Naive thymus-derived CD4-positive, alpha-beta T cell (primary cell): ENCODE measurements at regions of chr16 and their contacts with region 1.

Region 1: DNA sequence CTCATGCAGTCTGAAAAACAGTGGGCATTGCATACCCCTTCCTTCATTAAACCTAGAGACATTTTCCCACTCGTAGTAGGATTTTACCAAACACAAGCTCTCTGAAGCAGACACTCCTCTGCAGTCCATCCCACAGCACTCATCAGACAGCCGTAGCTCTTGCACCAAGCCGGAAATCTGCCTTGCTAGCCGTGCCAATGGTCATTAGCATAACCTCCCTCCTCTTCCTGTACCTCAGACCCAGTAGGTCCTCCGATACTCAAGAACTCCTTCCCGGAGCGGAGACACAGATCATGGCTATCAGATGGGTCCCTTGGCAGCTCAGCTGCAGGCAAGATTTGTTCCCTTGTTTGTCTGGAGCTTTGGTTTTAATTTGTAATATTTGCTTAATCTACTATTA is 483.1 kb upstream of the PSMD7 start:
- DNase-seq: no peak
- ATAC-seq: no peak
- H3K4me3 ChIP-seq: no peak overlapping the region
- H3K4me3 Mint-ChIP-seq: no peak overlapping the region
- H3K27ac ChIP-seq: no peak overlapping the region
- H3K27ac Mint-ChIP-seq: no peak overlapping the region
- H3K4me1 ChIP-seq: no peaks in the 10 kb centered on the region
- H3K4me1 Mint-ChIP-seq: no peaks in the 10 kb centered on the region
- H3K27me3 ChIP-seq: no peaks in the 10 kb centered on the region
- H3K27me3 Mint-ChIP-seq: peaks cover 0 to 5% (median 0%) of the 10 kb centered on the region in 5 donors

Region 2: DNA sequence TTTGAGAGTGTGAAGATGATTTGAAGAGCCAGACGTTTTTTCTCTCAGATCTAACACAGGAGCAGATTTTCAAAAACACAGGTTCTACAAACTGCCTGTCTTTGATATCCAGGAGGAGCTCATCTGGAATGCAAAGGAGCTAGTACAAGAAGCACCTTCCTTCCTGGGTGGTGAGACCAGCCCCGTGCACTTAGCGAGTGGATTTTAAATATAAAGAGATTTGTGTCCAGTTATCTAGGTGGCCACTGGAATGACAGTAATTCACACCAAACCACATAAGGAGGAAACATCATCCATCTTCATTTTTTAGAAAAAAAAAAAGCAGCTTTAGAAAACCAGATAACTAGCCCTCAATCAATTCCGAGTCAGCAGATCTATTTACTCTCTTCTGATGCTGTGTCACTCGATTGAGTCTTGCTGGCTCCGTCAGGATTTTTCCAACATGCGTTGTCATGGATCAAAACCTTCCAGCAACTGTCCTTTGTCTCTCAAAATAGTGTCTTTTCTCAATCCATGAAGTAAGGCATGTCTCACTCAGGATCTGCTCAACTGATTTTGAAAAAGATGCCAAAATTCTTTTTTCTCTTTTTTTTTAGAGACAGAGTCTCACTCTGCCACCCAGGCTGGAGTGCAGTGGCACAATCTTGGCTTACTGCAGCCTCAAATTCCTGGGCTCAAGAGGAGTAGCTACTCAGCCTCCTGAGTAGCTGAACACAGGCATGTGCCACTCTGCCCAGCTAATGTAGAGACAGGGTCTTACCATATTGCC is 31.9 kb after region 1 on chr16:
- CTCF ChIA-PET with region 1: no interaction called
- POLR2A ChIA-PET with region 1: no interaction called
- intact Hi-C with region 1: no loop called
- DNase-seq: no peak
- ATAC-seq: no peak
- H3K4me3 ChIP-seq: no peak overlapping the region
- H3K4me3 Mint-ChIP-seq: no peak overlapping the region
- H3K27ac ChIP-seq: no peak overlapping the region
- H3K27ac Mint-ChIP-seq: no peak overlapping the region
- H3K4me1 ChIP-seq: no peaks in the 10 kb centered on the region
- H3K4me1 Mint-ChIP-seq: no peaks in the 10 kb centered on the region
- H3K27me3 ChIP-seq: no peaks in the 10 kb centered on the region
- H3K27me3 Mint-ChIP-seq: no peaks in the 10 kb centered on the region

Region 3: GRCh38 chr16:73966851-73967250 is 153.3 kb after region 1 on chr16:
- CTCF ChIA-PET with region 1: no interaction called
- POLR2A ChIA-PET with region 1: no interaction called
- intact Hi-C with region 1: loop called in 1 of 2 experiments (anchors 5 kb)
- DNase-seq: no peak
- ATAC-seq: no peak
- H3K4me3 ChIP-seq: no peak overlapping the region
- H3K4me3 Mint-ChIP-seq: no peak overlapping the region
- H3K27ac ChIP-seq: no peak overlapping the region
- H3K27ac Mint-ChIP-seq: no peak overlapping the region
- H3K4me1 ChIP-seq: no peaks in the 10 kb centered on the region
- H3K4me1 Mint-ChIP-seq: no peaks in the 10 kb centered on the region
- H3K27me3 ChIP-seq: no peaks in the 10 kb centered on the region
- H3K27me3 Mint-ChIP-seq: peaks cover 0 to 5% (median 0%) of the 10 kb centered on the region in 5 donors